Naive thymus-derived CD8-positive, alpha-beta T cell (primary cell): ENCODE measurements at regions of chr10 and their contacts with region 1.

Region 1: GRCh38 chr10:119517235-119518141 is 25.0 kb downstream of the RGS10 start:
- DNase-seq: peak in 5 of 10 donors; percentile 37 to 50 (median 42)
- ATAC-seq: peak; percentile 21 to 47
- H3K4me3 Mint-ChIP-seq: peak overlapping the region; percentile 60 to 85 (median 78)
- H3K27ac Mint-ChIP-seq: peak overlapping the region; percentile 88 to 99 (median 96)
- H3K4me1 Mint-ChIP-seq: peaks cover 29 to 86% (median 78%) of the 10 kb centered on the region in 4 donors
- H3K27me3 Mint-ChIP-seq: no peaks in the 10 kb centered on the region

Region 2: DNA sequence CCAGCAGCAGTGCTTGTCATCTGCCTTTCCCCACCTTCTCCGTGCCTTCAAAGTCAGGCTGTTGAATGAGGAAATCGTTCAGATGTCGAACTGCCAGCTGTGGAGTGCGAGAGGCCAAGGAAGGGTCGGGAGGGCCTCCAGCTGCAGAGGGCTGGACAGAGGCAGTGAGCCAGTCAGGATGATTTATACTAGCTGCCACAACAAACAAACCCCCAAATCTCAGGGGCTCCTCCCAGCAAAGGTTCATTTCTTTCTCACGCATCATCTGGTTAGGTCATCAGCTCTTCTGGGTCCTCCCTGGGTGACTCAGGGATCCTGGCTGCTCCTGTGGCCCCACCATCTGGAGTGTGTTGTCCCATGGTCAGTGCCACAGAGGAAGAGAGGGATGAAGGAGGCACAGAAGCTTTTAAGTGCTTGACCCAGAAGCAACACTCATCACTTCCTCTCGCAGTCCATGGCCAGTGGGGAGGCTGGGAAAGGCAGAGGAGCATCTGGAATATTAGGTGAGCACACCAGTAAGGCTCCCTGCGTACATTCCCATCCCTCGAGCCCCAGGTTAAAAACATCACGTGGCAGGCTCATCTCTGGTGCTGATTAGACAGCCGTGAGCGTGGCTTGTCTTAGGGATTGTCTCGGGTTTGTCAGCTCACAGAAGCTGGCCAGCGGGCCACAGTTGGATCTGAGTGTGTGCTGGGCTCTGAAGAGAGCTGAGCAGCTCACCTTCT is 115.7 kb before region 1 on chr10:
- POLR2A ChIA-PET with region 1: no interaction called
- DNase-seq: no peak
- ATAC-seq: no peak
- H3K4me3 Mint-ChIP-seq: no peak overlapping the region
- H3K27ac Mint-ChIP-seq: peak overlapping the region in 2 of 10 donors; percentile 35 to 86
- H3K4me1 Mint-ChIP-seq: peaks cover 0 to 27% (median 3%) of the 10 kb centered on the region in 4 donors
- H3K27me3 Mint-ChIP-seq: no peaks in the 10 kb centered on the region

Region 3: DNA sequence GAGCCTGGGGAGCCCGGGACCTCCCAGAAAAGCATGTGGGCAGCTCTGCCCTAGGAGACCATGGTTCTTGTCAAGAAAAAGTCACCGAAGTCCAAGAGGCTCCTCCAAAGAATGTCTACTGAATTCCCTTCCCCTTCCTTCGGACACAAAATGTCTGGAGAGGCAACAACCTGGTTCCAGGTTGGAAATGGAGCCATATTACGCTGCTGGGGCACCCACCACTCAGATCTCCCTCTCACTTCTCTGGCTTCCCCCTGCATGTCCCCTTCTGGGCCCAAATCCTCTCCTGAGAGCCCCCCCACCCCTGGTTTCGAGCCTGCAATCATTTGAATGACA is 27.5 kb before region 1 on chr10:
- POLR2A ChIA-PET with region 1: interaction called, 71 read pairs
- DNase-seq: no peak
- ATAC-seq: no peak
- H3K4me3 Mint-ChIP-seq: peak overlapping the region; percentile 75 to 94 (median 88)
- H3K27ac Mint-ChIP-seq: peak overlapping the region; percentile 75 to 99 (median 96)
- H3K4me1 Mint-ChIP-seq: peaks cover 21 to 61% (median 55%) of the 10 kb centered on the region in 4 donors
- H3K27me3 Mint-ChIP-seq: no peaks in the 10 kb centered on the region

Region 4: GRCh38 chr10:119496273-119496672 is 21.2 kb before region 1 on chr10:
- POLR2A ChIA-PET with region 1: interaction called, 71 read pairs
- DNase-seq: no peak
- ATAC-seq: peak in 1 of 2 donors; percentile 19
- H3K4me3 Mint-ChIP-seq: peak overlapping the region in 7 of 10 donors; percentile 28 to 62 (median 42)
- H3K27ac Mint-ChIP-seq: peak overlapping the region; percentile 76 to 100 (median 93)
- H3K4me1 Mint-ChIP-seq: peaks cover 52 to 94% (median 89%) of the 10 kb centered on the region in 4 donors
- H3K27me3 Mint-ChIP-seq: no peaks in the 10 kb centered on the region

Region 5: DNA sequence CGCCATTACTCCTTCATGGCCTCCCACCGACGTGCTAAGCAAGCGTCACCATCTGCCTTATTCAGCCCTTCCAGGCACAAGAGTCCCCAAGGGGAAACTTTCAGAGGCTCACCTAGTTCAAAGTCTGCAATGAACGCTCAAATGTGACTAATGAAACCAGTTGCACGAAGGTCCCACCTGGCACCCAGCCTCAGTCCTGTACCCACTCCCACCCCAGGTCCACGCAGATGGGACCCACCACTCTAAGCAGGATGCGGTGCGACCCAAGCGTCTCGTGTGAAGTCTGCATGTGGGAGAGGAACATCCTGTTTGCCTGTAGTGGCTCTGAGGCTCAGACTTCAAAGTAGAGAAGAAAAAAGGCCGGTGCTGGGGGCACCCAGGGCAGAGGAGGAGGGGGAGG is 15.3 kb before region 1 on chr10:
- POLR2A ChIA-PET with region 1: interaction called, 118 read pairs
- DNase-seq: peak; percentile 66 to 96 (median 90)
- ATAC-seq: peak; percentile 78 to 88
- H3K4me3 Mint-ChIP-seq: peak overlapping the region; percentile 68 to 87 (median 82)
- H3K27ac Mint-ChIP-seq: peak overlapping the region; percentile 94 to 100 (median 99)
- H3K4me1 Mint-ChIP-seq: peaks cover 58 to 99% (median 97%) of the 10 kb centered on the region in 4 donors
- H3K27me3 Mint-ChIP-seq: no peaks in the 10 kb centered on the region